Ovary (tissue), 10 donors: ENCODE measurements at regions of chr11 and their contacts with region 1.

Region 1: GRCh38 chr11:36258730-36259360 is 30.4 kb downstream of the COMMD9 start:
- DNase-seq: peak; percentile 46 to 59 (median 56)
- H3K4me3 ChIP-seq: no peak overlapping the region
- H3K27ac ChIP-seq: no peak overlapping the region
- H3K4me1 ChIP-seq: no peaks in the 10 kb centered on the region
- H3K27me3 ChIP-seq: no peaks in the 10 kb centered on the region
- CTCF ChIP-seq: no peak
- EP300 ChIP-seq: no peak
- POLR2A ChIP-seq: no peak

Region 2: GRCh38 chr11:36149538-36150242 is 109.2 kb before region 1 on chr11:
- intact Hi-C with region 1: loop called in 2 of 4 experiments (anchors 10 kb)
- DNase-seq: peak; percentile 45 to 68 (median 49)
- H3K4me3 ChIP-seq: no peak overlapping the region
- H3K27ac ChIP-seq: no peak overlapping the region
- H3K4me1 ChIP-seq: peaks cover 16% of the 10 kb centered on the region
- H3K27me3 ChIP-seq: no peaks in the 10 kb centered on the region
- CTCF ChIP-seq: no peak
- EP300 ChIP-seq: peak; percentile 12
- POLR2A ChIP-seq: no peak

Region 3: GRCh38 chr11:36205536-36205935 is 53.3 kb before region 1 on chr11:
- intact Hi-C with region 1: no loop called
- DNase-seq: no peak
- H3K4me3 ChIP-seq: no peak overlapping the region
- H3K27ac ChIP-seq: no peak overlapping the region
- H3K4me1 ChIP-seq: no peaks in the 10 kb centered on the region
- H3K27me3 ChIP-seq: no peaks in the 10 kb centered on the region
- CTCF ChIP-seq: no peak
- EP300 ChIP-seq: no peak
- POLR2A ChIP-seq: no peak

Region 4: DNA sequence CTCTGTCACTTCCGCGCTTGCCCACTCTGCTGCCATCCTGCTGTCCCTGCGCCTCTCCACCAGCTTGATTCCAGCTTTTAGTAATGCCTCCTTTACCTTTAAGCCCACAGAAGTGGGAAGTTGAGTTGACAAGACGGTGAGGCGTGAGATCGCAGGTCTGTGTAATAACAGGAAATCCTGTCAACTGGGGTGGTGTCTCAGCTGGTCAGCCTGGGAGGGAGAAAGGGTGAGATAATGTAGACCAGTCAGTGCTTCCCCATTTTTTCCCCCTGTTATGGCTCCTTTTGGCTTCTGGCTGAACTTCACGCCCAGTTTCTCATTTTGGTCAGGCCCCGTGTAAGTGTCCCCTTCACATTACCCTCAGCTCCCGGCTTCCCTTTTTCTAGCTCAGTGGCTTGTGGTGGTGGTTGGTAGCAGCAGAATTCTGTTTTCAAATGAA is 152.4 kb after region 1 on chr11:
- intact Hi-C with region 1: no loop called
- DNase-seq: no peak
- H3K4me3 ChIP-seq: no peak overlapping the region
- H3K27ac ChIP-seq: no peak overlapping the region
- H3K4me1 ChIP-seq: no peaks in the 10 kb centered on the region
- H3K27me3 ChIP-seq: no peaks in the 10 kb centered on the region
- CTCF ChIP-seq: no peak
- EP300 ChIP-seq: no peak
- POLR2A ChIP-seq: no peak